Activated CD8-positive, alpha-beta T cell treated with anti-CD3 and anti-CD28 coated beads for 36 hours (primary cell): ENCODE measurements at regions of chr13 and their contacts with region 1.

Region 1: DNA sequence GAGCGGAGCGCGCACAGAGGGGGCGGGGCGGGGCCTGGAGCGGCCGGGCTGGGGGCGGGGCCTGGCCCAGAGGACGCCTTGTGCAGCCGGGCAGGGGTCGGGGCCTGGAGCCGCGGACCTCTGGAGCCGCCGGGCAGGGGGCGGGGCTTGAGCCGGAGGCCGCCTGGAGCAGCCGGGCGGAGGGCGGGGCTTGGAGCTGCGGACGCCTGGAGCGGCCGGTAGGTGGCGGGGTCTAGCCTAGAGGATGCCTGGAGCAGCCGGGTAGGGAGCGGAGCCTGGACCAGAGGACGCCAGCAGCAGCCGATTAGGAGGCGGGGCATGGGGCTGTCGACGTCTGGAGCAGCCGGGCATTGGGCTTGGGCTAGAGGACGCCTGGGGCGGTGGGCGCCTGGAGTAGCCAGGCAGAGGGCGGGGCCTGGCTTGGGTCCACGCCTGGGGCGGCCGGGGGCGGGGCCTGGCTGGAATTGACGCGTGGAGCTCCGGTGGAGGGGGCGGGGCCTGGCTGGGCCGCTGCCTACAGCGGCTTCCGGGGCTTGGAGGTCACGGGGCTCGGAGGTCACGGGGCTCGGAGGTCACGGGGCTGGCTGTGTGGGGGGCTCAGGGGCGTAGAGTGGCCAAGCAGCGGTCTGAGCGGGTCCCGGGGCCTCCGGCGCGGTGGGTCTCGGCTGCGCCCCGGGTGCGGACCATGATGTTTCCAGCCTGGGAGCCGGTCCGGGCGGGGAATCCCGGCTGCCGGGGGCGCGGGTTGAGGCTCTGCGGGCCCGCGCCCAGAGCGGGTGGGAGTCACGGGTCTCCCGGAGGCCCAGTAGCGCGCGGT is at the start of gene ANKRD10:
- DNase-seq: peak; percentile 97
- ATAC-seq: peak; percentile 86
- H3K4me3 Mint-ChIP-seq: peak within 1 kb of the TSS; percentile 90
- H3K27ac Mint-ChIP-seq: peak within 1 kb of the TSS; percentile 94
- H3K4me1 Mint-ChIP-seq: peaks cover 35% of the 10 kb centered on the region
- H3K27me3 Mint-ChIP-seq: no peaks in the 10 kb centered on the region
- CTCF ChIP-seq: peak; percentile 72
- total RNA-seq, gene ANKRD10: 81.6 to 86.1 TPM

Region 2: GRCh38 chr13:110715395-110716235 is 199.7 kb before region 1 on chr13:
- CTCF ChIA-PET with region 1: interaction called, 3 read pairs
- POLR2A ChIA-PET with region 1: interaction called, 12 read pairs
- intact Hi-C with region 1: loop called (anchors 5 kb)
- DNase-seq: peak; percentile 98
- ATAC-seq: peak; percentile 64
- H3K4me3 Mint-ChIP-seq: peak overlapping the region; percentile 98
- H3K27ac Mint-ChIP-seq: peak overlapping the region; percentile 96
- H3K4me1 Mint-ChIP-seq: peaks cover 33% of the 10 kb centered on the region
- H3K27me3 Mint-ChIP-seq: no peaks in the 10 kb centered on the region
- CTCF ChIP-seq: no peak

Region 3: DNA sequence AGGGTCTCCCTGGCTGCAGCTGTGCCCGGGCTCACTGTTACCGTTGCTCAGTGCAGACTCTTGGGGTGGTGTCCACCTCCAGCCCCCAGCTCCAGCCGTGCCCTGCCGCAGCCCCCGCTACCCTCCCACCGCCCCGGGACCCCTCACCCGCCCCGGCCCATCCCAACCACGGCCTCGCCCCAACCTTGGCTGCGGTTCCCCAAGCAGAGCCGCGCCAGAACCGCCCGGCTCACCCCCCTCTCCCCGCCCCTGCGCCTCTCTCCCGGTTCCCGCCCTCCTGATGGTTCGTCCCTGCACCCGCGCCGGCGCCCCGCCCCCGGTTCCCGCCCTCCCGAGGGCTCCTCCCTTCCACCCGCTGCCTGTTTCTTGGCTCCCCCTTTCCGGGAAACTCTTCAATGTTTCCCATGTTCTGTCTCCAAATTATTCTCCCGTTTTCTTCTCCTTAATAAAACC is 40.7 kb before region 1 on chr13:
- CTCF ChIA-PET with region 1: no interaction called
- POLR2A ChIA-PET with region 1: no interaction called
- intact Hi-C with region 1: no loop called
- DNase-seq: peak; percentile 49
- ATAC-seq: peak; percentile 77
- H3K4me3 Mint-ChIP-seq: peak overlapping the region; percentile 70
- H3K27ac Mint-ChIP-seq: no peak overlapping the region
- H3K4me1 Mint-ChIP-seq: peaks cover 13% of the 10 kb centered on the region
- H3K27me3 Mint-ChIP-seq: peaks cover 17% of the 10 kb centered on the region
- CTCF ChIP-seq: no peak

Region 4: DNA sequence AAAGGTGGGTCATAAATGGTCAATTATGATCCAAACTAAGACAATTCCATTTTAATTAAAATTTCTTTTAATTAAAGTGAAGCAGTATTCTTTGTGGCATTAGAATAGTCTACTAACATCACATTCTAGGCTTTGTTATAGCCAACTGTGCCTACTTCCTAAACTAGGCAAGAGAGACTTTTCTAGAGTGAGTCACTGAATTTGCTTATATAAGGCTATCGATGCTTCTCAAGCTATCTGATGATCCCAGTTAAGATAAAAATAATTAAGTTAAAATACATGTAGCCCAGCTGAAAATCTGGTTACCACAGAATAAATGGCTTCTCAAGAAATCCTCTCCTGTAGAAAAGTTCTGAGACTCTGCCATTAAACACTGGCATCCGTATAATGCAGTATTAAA is 12.9 kb before region 1 on chr13:
- CTCF ChIA-PET with region 1: interaction called, 19 read pairs
- POLR2A ChIA-PET with region 1: interaction called, 21 read pairs
- intact Hi-C with region 1: no loop called
- DNase-seq: no peak
- ATAC-seq: no peak
- H3K4me3 Mint-ChIP-seq: no peak overlapping the region
- H3K27ac Mint-ChIP-seq: no peak overlapping the region
- H3K4me1 Mint-ChIP-seq: peaks cover 21% of the 10 kb centered on the region
- H3K27me3 Mint-ChIP-seq: no peaks in the 10 kb centered on the region
- CTCF ChIP-seq: no peak

Region 5: DNA sequence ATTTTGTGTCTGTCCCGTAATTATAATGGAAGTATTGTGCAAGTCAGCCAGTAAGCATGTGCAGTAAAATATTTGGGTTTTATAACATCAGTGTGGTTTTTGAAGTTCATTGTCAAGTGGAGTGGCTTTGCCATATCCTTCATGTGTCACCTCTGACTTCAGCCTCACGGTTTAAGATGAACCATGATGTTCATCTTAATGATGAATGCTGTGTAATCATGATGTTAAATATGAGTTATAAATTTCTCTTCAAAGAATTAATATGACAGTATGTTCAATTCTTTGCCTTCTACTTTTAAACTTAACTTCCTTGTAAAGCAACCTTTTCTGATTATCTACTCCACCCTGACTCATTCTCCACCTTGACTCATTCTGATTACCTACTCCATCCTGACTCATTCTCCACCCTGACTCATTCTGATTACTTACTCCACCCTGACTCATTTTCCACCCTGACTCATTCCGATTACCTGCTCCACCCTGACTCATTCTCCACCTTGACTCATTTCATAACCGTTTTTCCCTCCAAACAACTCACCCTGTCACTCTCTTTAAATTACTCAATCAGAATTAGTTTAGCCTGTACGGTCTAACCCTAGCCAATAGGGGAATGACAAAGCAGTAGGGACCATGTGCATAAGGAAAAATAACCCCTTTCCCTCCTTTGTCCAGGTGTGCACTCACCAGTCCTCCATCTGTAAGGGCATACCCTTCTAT is 49.9 kb after region 1 on chr13:
- CTCF ChIA-PET with region 1: no interaction called
- POLR2A ChIA-PET with region 1: no interaction called
- intact Hi-C with region 1: loop called (anchors 5 kb)
- DNase-seq: peak; percentile 64
- ATAC-seq: peak; percentile 91
- H3K4me3 Mint-ChIP-seq: peak overlapping the region; percentile 6
- H3K27ac Mint-ChIP-seq: peak overlapping the region; percentile 88
- H3K4me1 Mint-ChIP-seq: peaks cover 16% of the 10 kb centered on the region
- H3K27me3 Mint-ChIP-seq: peaks cover 16% of the 10 kb centered on the region
- CTCF ChIP-seq: no peak

Region 6: GRCh38 chr13:111359237-111359915 is 444.1 kb after region 1 on chr13:
- CTCF ChIA-PET with region 1: no interaction called
- POLR2A ChIA-PET with region 1: no interaction called
- intact Hi-C with region 1: no loop called
- DNase-seq: no peak
- ATAC-seq: no peak
- H3K4me3 Mint-ChIP-seq: no peak overlapping the region
- H3K27ac Mint-ChIP-seq: no peak overlapping the region
- H3K4me1 Mint-ChIP-seq: peaks cover 7% of the 10 kb centered on the region
- H3K27me3 Mint-ChIP-seq: no peaks in the 10 kb centered on the region
- CTCF ChIP-seq: no peak